Mammary epithelial cell (primary cell): ENCODE measurements at regions of chr1 and their contacts with region 1.

Region 1: DNA sequence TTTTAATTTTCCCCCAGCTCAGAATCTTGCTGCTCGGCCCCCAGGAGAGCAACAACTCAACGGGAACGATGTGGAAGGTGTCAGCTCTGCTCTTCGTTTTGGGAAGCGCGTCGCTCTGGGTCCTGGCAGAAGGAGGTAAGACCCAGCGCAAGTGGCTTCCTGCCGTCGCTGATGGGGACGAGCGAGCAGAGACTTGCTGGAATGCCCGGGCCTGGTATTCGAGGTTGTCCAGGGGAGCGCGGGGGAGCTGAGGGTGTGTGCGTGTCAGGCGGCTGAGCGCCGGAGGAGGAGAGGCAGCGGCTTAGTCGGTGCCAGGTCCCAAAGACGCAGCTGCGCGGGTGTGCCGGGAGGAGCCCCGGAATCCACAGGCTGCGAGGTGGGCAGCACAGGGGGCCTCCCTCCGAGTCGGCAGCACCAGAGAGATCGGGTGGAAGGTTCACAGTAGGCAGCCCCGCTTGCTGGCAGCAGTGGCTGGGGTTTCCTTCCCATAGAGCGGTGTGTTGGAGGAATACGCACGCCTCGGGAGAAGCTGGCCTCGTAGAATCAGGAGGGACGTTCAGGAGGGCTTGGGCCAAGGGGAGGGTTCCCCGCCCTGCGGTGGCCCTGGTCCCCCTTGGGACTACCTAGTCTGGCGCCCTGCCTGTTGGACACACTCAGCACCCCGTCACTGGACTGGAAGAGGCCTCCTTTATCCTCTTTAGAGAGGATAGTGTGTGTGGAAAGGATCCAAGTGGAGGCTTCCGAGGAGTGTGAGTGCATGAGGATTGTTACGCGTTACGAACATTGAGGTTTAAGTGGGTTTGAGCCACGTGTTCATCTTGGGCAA is 547 bp downstream of the PDPN start:
- DNase-seq: peak; percentile 29
- H3K4me3 ChIP-seq: peak overlapping the region; percentile 52 to 55 (median 53)
- H3K27ac ChIP-seq: peak overlapping the region; percentile 29
- H3K4me1 ChIP-seq: peaks cover 7% of the 10 kb centered on the region
- H3K27me3 ChIP-seq: no peaks in the 10 kb centered on the region
- CTCF ChIP-seq: no peak

Region 2: GRCh38 chr1:13543451-13544220 is 40.5 kb before region 1 on chr1:
- CTCF ChIA-PET with region 1: no interaction called
- dilution Hi-C with region 1: no loop called
- in situ Hi-C with region 1: no loop called
- intact Hi-C with region 1: loop called (anchors 5 kb)
- DNase-seq: no peak
- H3K4me3 ChIP-seq: no peak overlapping the region
- H3K27ac ChIP-seq: no peak overlapping the region
- H3K4me1 ChIP-seq: no peaks in the 10 kb centered on the region
- H3K27me3 ChIP-seq: no peaks in the 10 kb centered on the region
- CTCF ChIP-seq: peak; percentile 31 to 55

Region 3: DNA sequence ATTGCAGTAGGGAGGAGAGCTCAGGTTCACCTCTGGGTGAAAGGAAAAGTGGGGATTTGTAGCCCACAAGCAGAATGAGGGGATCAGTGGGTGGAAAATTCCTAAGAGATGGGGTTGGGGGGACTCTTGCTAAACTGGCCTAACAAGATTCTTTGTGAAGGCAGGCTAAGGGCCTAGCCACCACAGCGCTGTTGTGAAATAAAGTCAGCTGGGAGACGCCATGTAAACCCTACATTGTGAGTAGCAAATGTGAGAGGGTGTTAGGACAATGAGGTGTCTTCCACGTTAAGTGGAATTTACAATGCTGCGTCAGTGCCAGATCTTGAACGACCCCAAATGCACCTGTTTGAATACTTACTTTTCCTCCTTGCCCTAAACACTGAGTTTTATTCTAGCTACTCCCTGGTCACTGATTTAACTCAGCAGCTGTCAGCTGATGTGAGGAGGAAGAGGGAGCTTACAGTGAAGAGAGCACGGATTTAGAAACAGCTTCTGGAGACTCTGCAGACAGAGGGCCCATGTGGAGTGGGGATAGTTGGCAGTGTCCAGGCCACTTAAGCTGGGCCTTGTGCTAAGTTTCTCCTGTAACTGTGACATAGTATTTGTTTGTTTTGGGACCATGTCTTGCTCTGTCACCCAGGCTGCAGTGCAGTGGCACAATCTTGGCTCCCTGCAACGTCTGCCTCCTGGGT is 16.7 kb after region 1 on chr1:
- CTCF ChIA-PET with region 1: no interaction called
- dilution Hi-C with region 1: no loop called
- in situ Hi-C with region 1: no loop called
- intact Hi-C with region 1: loop called (anchors 1 kb)
- DNase-seq: no peak
- H3K4me3 ChIP-seq: no peak overlapping the region
- H3K27ac ChIP-seq: no peak overlapping the region
- H3K4me1 ChIP-seq: peaks cover 14% of the 10 kb centered on the region
- H3K27me3 ChIP-seq: no peaks in the 10 kb centered on the region
- CTCF ChIP-seq: no peak